Activated B cell treated with CpG ODN at 0.5 μM for 24 hours (primary cell): ENCODE measurements at regions of chr13 and their contacts with region 1.

Region 1: GRCh38 chr13:60431108-60431700 is 34.2 kb downstream of the TDRD3 start:
- DNase-seq: no peak
- ATAC-seq: peak; percentile 86
- H3K4me3 Mint-ChIP-seq: no peak overlapping the region
- H3K27ac Mint-ChIP-seq: no peak overlapping the region
- H3K4me1 Mint-ChIP-seq: peaks cover 24% of the 10 kb centered on the region
- H3K27me3 Mint-ChIP-seq: no peaks in the 10 kb centered on the region
- CTCF ChIP-seq: peak; percentile 65

Region 2: GRCh38 chr13:59391696-59392095 is 1039.5 kb before region 1 on chr13:
- CTCF ChIA-PET with region 1: interaction called, 14 read pairs
- POLR2A ChIA-PET with region 1: no interaction called
- intact Hi-C with region 1: loop called (anchors 1 kb)
- DNase-seq: no peak
- ATAC-seq: peak; percentile 64
- H3K4me3 Mint-ChIP-seq: no peak overlapping the region
- H3K27ac Mint-ChIP-seq: no peak overlapping the region
- H3K4me1 Mint-ChIP-seq: no peaks in the 10 kb centered on the region
- H3K27me3 Mint-ChIP-seq: no peaks in the 10 kb centered on the region
- CTCF ChIP-seq: no peak

Region 3: DNA sequence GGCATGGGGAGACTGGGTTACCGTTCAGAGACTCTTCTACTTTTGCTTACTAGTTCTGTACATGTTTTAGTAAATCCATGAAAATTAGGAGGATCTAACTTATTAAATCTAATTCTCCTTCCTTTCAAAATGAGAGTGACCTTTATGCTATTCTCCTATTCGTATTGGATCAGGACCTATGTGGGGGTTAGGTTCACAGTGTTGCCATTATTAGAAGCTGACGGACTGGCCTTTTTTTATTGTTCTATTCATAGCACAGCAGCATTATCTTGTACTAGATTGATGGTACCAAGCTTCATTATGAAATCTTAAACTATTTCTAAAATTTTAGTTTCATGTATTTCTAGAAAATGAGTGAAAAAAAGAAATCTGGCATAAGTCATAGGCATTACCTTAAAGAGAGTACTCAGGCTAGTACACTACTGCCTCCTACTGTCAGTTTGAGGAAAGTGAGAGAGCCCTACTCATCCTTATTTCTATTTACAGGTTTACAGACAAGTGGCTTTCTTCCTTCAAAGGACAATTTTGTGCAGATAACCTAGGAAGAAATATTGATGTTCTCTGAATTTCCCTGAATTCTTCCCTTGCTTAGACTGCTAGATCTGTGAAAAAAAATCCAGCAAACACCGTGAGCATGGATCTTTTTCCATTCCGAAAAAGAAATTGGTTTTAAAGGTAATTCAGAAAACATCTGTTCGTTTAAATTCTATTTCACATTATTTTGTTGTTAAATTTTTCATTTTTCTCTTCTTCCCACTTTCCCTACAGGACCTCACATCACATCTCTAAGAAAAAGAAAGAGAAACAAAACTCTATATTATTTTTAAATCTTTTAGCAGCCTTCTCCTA is 753.0 kb before region 1 on chr13:
- CTCF ChIA-PET with region 1: interaction called, 48 read pairs
- POLR2A ChIA-PET with region 1: no interaction called
- intact Hi-C with region 1: loop called (anchors 1 kb)
- DNase-seq: no peak
- ATAC-seq: no peak
- H3K4me3 Mint-ChIP-seq: no peak overlapping the region
- H3K27ac Mint-ChIP-seq: no peak overlapping the region
- H3K4me1 Mint-ChIP-seq: peaks cover under 1% of the 10 kb centered on the region
- H3K27me3 Mint-ChIP-seq: no peaks in the 10 kb centered on the region
- CTCF ChIP-seq: no peak

Region 4: DNA sequence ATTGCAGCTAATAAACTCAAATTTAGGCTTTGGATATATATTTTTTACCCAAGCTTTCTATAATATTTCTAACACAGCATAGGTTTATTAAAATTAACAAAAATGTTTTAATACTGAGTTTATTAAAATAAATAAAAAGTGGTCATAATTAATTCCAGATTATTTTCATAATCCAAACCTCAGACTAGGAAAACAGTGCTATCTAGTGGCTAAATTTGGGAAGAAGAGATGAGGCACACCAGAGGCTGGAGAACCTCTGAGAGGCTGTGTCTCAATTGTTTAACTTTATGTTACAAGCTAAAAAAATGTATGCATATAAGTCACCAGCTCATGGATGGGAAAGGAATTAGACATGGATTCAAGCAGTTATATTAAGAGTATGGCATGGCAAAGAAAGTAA is 659.9 kb before region 1 on chr13:
- CTCF ChIA-PET with region 1: interaction called, 7 read pairs
- POLR2A ChIA-PET with region 1: no interaction called
- intact Hi-C with region 1: loop called (anchors 5 kb)
- DNase-seq: no peak
- ATAC-seq: no peak
- H3K4me3 Mint-ChIP-seq: no peak overlapping the region
- H3K27ac Mint-ChIP-seq: no peak overlapping the region
- H3K4me1 Mint-ChIP-seq: no peaks in the 10 kb centered on the region
- H3K27me3 Mint-ChIP-seq: no peaks in the 10 kb centered on the region
- CTCF ChIP-seq: no peak

Region 5: GRCh38 chr13:60335531-60335930 is 95.7 kb before region 1 on chr13:
- CTCF ChIA-PET with region 1: interaction called, 4 read pairs
- POLR2A ChIA-PET with region 1: no interaction called
- intact Hi-C with region 1: loop called (anchors 2 kb)
- DNase-seq: no peak
- ATAC-seq: no peak
- H3K4me3 Mint-ChIP-seq: no peak overlapping the region
- H3K27ac Mint-ChIP-seq: no peak overlapping the region
- H3K4me1 Mint-ChIP-seq: no peaks in the 10 kb centered on the region
- H3K27me3 Mint-ChIP-seq: peaks cover 8% of the 10 kb centered on the region
- CTCF ChIP-seq: peak; percentile 38

Region 6: GRCh38 chr13:60396783-60397703 is 34.2 kb before region 1 on chr13 and contains the start of gene TDRD3:
- CTCF ChIA-PET with region 1: interaction called, 5 read pairs
- POLR2A ChIA-PET with region 1: interaction called, 12 read pairs
- intact Hi-C with region 1: loop called (anchors 1 kb)
- DNase-seq: peak; percentile 83
- ATAC-seq: peak; percentile 68
- H3K4me3 Mint-ChIP-seq: peak within 1 kb of the TSS; percentile 95
- H3K27ac Mint-ChIP-seq: peak within 1 kb of the TSS; percentile 97
- H3K4me1 Mint-ChIP-seq: peaks cover 31% of the 10 kb centered on the region
- H3K27me3 Mint-ChIP-seq: no peaks in the 10 kb centered on the region
- CTCF ChIP-seq: peak; percentile 24
- total RNA-seq, gene TDRD3: 19.7 and 22.5 TPM in 2 replicates

Region 7: DNA sequence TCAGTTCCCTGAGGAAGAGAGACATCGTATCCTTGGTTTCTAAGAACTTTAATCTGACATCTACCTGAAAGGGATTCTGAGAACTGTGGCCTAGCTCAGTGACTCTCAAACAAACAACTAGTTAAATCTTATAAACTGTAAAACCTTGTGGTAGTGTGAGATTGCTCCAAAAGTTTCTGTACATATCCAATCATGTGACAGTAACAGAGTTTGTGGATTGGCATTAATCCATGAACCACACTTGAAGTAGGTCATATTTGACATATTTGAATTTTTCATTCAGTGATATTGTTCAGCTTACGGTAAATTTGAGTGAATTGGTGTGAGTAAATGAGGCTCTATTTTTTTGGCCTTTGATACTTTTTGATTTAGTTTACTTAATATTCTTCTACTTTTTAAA is 19.2 kb before region 1 on chr13:
- CTCF ChIA-PET with region 1: interaction called, 4 read pairs
- POLR2A ChIA-PET with region 1: no interaction called
- intact Hi-C with region 1: loop called (anchors 2 kb)
- DNase-seq: no peak
- ATAC-seq: no peak
- H3K4me3 Mint-ChIP-seq: no peak overlapping the region
- H3K27ac Mint-ChIP-seq: no peak overlapping the region
- H3K4me1 Mint-ChIP-seq: peaks cover 13% of the 10 kb centered on the region
- H3K27me3 Mint-ChIP-seq: no peaks in the 10 kb centered on the region
- CTCF ChIP-seq: no peak

Region 8: DNA sequence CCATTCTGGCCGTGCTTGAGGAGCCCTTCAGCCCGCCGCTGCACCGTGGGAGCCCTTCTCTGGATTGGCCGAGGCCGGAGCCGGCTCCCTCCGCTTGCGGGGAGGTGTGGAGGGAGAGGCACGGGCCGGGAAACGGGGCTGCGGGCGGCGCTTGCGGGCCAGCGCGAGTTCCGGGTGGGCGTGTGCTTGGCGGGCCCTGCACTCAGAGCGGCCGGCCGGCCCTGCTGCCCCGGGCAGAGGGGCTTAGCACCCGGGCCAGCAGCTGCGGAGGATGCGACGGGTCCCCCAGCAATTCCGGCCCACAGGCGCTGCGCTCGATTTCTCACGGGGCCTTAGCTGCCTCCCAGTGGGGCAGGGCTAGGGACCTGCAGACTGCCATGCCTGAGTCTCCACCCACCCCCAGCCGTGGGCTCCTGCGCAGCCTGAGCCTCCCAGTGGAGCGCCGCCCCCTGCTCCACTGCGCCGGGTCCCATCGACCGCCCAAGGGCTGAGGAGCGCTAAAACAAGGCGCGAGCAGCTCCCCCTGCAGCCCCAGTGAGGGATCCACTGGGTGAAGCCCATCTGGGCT is 907.9 kb after region 1 on chr13:
- CTCF ChIA-PET with region 1: no interaction called
- POLR2A ChIA-PET with region 1: no interaction called
- intact Hi-C with region 1: no loop called
- DNase-seq: no peak
- ATAC-seq: no peak
- H3K4me3 Mint-ChIP-seq: no peak overlapping the region
- H3K27ac Mint-ChIP-seq: no peak overlapping the region
- H3K4me1 Mint-ChIP-seq: no peaks in the 10 kb centered on the region
- H3K27me3 Mint-ChIP-seq: no peaks in the 10 kb centered on the region
- CTCF ChIP-seq: no peak

Region 9: DNA sequence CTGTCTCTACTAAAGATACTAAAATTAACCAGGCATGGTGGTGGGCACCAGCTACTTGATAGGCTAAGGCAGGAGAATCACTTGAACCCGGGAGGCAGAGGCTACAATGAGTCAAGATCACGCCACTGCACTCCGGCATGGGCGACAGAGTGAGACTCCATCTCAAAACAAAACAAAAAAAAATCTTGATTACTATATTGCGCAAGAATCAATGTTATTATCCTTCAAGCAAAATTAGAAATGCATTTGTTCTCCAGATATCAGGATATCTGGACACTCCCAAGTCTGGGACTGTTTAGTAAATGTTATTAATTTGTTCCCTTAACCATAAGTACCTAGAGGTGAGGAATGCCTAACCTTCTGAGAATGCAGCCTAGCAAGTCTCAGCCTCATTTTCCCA is 1976.7 kb after region 1 on chr13:
- CTCF ChIA-PET with region 1: no interaction called
- POLR2A ChIA-PET with region 1: no interaction called
- intact Hi-C with region 1: no loop called
- DNase-seq: no peak
- ATAC-seq: no peak
- H3K4me3 Mint-ChIP-seq: no peak overlapping the region
- H3K27ac Mint-ChIP-seq: no peak overlapping the region
- H3K4me1 Mint-ChIP-seq: no peaks in the 10 kb centered on the region
- H3K27me3 Mint-ChIP-seq: no peaks in the 10 kb centered on the region
- CTCF ChIP-seq: no peak